ENCODE measurements at regions of chr10 and their contacts with region 1.

Region 1: GRCh38 chr10:93073539-93074146 is at the start of gene CYP26A1:
- DNase-seq: no peak
- H3K4me3 Mint-ChIP-seq: peak within 1 kb of the TSS; percentile 75
- H3K27ac Mint-ChIP-seq: no peak within 1 kb of the TSS
- H3K4me1 Mint-ChIP-seq: peaks cover 20% of the 10 kb centered on the region
- H3K27me3 Mint-ChIP-seq: peaks cover 75% of the 10 kb centered on the region
- total RNA-seq, gene CYP26A1: not detected in 2 replicates

Region 2: GRCh38 chr10:92938841-92939240 is 134.8 kb before region 1 on chr10:
- intact Hi-C with region 1: no loop called
- DNase-seq: no peak
- H3K4me3 Mint-ChIP-seq: no peak overlapping the region
- H3K27ac Mint-ChIP-seq: no peak overlapping the region
- H3K4me1 Mint-ChIP-seq: no peaks in the 10 kb centered on the region
- H3K27me3 Mint-ChIP-seq: no peaks in the 10 kb centered on the region

Region 3: GRCh38 chr10:93313798-93314197 is 240.2 kb after region 1 on chr10:
- intact Hi-C with region 1: no loop called
- DNase-seq: no peak
- H3K4me3 Mint-ChIP-seq: no peak overlapping the region
- H3K27ac Mint-ChIP-seq: no peak overlapping the region
- H3K4me1 Mint-ChIP-seq: peaks cover 9% of the 10 kb centered on the region
- H3K27me3 Mint-ChIP-seq: no peaks in the 10 kb centered on the region

Region 4: DNA sequence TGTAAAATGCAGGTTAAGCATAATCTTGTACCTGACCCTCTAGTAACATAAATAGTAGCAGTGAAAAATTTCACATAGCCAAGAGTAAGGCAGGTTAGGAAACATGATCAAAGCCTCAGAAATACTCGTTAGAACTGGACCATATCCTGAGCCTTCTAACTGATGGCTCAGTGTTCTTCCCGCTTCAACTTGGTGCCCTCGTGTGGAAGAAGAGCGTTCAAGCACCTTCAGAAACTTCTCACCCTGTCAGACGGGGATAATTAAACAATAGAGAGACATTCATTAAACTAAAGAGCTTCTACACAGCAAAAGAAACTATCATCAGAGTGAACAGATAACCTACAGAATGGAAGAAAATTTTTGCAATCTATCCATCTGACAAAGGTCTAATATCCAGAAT is 284.0 kb after region 1 on chr10:
- intact Hi-C with region 1: loop called (anchors 5 kb)
- DNase-seq: no peak
- H3K4me3 Mint-ChIP-seq: no peak overlapping the region
- H3K27ac Mint-ChIP-seq: peak overlapping the region; percentile 24
- H3K4me1 Mint-ChIP-seq: peaks cover 9% of the 10 kb centered on the region
- H3K27me3 Mint-ChIP-seq: no peaks in the 10 kb centered on the region

Measured in activated T-helper 2 cell treated with anti-CD3 and anti-CD28 coated beads, Interferon-gamma antibody, Interleukin-2, Interleukin-4, amounts not matched to agents 10 μg/mL and 5 μg/mL and 100 μg/mL, durations not matched to agents 14 hours and 24 hours and 36 hours (primary cell).